ENCODE measurements at regions of chr19 and their contacts with region 1.

Region 1: DNA sequence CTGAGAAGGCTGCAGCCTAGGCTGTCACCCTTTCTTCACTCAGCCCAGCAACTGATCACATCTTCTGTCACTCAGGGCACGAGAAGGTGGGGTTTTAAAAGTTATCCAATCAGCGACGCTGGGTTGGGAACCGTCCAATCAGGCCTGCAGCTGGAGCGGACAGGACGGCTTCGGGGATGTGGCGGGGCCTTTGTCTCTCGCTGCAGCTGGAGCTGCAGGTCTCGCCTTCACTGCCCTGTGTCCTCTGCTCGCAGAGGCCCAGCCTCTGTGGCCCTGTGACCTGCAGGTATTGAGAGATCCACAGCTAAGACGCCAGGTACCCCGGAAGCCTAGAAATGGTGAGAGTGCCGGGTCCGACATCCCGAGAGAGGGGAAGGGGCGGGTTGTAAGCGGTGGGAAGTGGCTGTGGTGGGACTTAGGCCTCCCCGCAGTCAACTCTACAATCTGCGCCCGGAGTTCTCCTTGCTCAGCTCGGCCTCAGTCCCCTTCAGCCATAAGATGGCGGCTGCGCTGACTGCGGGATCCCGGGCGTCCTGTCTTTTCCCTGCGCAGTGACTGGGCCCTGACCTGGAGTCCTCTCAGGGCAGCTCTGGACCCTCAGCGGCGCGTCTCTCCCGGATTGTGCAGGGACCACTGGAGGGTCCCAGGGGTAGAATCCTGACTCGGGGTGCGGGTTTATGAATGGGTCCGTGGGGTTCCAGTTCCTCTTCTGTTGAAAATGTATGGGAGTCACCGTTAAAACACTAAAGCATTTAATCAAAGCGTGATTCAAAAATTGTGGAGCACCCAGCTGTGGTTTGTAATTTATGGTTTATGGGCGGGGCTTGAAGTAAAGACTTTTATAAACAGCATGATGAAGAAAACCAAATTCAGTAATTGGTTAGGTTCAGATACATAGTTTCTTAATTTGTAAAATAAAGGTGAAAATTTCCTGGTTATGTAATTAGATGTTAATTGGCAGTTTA is at the start of gene ZNF714:
- DNase-seq: peak; percentile 57 to 93 (median 74)
- ATAC-seq: peak; percentile 99
- H3K4me3 ChIP-seq: peak within 1 kb of the TSS; percentile 85
- H3K4me3 Mint-ChIP-seq: peak within 1 kb of the TSS; percentile 100
- H3K27ac ChIP-seq: peak within 1 kb of the TSS in 1 of 2 donors; percentile 26
- H3K27ac Mint-ChIP-seq: peak within 1 kb of the TSS; percentile 95
- H3K4me1 ChIP-seq: peaks cover 10% of the 10 kb centered on the region
- H3K4me1 Mint-ChIP-seq: peaks cover 4% of the 10 kb centered on the region
- H3K27me3 ChIP-seq: no peaks in the 10 kb centered on the region
- H3K27me3 Mint-ChIP-seq: no peaks in the 10 kb centered on the region
- CTCF ChIP-seq: no peak
- total RNA-seq, gene ZNF714: 8.0 to 10.0 TPM

Region 2: GRCh38 chr19:20237761-20238623 is 844.3 kb before region 1 on chr19:
- CTCF ChIA-PET with region 1: no interaction called
- POLR2A ChIA-PET with region 1: no interaction called
- intact Hi-C with region 1: loop called in 1 of 2 experiments (anchors 2 kb)
- DNase-seq: peak; percentile 71 to 93 (median 82)
- ATAC-seq: peak; percentile 98
- H3K4me3 ChIP-seq: peak overlapping the region; percentile 88
- H3K4me3 Mint-ChIP-seq: peak overlapping the region; percentile 97
- H3K27ac ChIP-seq: no peak overlapping the region
- H3K27ac Mint-ChIP-seq: peak overlapping the region; percentile 70
- H3K4me1 ChIP-seq: peaks cover 11% of the 10 kb centered on the region
- H3K4me1 Mint-ChIP-seq: peaks cover 12% of the 10 kb centered on the region
- H3K27me3 ChIP-seq: no peaks in the 10 kb centered on the region
- H3K27me3 Mint-ChIP-seq: no peaks in the 10 kb centered on the region
- CTCF ChIP-seq: no peak

Region 3: GRCh38 chr19:21141787-21142464 is 59.6 kb after region 1 on chr19 and contains the start of gene ZNF431:
- CTCF ChIA-PET with region 1: no interaction called
- POLR2A ChIA-PET with region 1: interaction called, 9 read pairs
- intact Hi-C with region 1: loop called (anchors 2 kb)
- DNase-seq: peak; percentile 79 to 96 (median 84)
- ATAC-seq: peak; percentile 99
- H3K4me3 ChIP-seq: peak within 1 kb of the TSS; percentile 67
- H3K4me3 Mint-ChIP-seq: peak within 1 kb of the TSS; percentile 95
- H3K27ac ChIP-seq: peak within 1 kb of the TSS; percentile 25 to 37
- H3K27ac Mint-ChIP-seq: peak within 1 kb of the TSS; percentile 91
- H3K4me1 ChIP-seq: peaks cover 8% of the 10 kb centered on the region
- H3K4me1 Mint-ChIP-seq: peaks cover 45% of the 10 kb centered on the region
- H3K27me3 ChIP-seq: no peaks in the 10 kb centered on the region
- H3K27me3 Mint-ChIP-seq: no peaks in the 10 kb centered on the region
- CTCF ChIP-seq: no peak
- total RNA-seq, gene ZNF431: 24.6 to 25.9 TPM